Heart left ventricle (tissue), 16 donors: ENCODE measurements at regions of chr18 and their contacts with region 1.

Region 1: DNA sequence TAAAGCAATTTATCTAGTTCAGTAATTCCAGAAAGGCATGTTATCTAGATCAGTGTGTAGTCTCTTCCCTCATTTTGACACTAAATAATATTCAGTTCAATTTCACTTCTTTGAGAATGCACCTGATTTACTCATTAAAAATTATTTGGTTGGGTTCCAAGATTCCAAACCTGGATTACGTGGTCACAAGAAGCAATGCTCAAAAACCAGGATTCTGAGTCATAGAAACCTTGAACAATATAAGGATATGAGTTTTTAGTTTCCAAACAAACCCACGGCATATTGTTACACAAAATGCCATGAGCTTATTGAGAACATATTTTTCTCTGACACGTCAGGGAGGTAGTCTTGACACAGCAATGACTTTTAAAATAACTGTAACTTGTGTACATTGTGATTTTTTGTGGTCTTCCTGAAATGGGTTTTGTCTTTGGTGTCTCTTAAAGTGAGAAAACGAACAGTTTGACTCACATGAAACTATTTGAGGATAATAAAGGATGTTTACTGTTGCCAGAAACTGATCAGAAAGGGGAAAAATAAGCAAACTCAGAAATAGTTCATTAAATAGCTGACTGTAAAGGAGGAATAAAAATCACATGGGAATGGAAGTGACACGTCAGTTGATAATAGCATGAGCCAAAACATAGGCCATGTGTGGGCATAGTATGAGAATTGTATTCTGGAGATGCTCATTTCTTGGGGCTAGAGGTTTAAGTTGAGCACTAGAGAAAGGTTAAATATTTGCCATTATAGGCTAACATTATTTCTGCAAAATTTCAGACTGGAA is 617.7 kb upstream of the CDH2 start:
- DNase-seq: no peak
- ATAC-seq: peak in 3 of 4 donors; percentile 36 to 69 (median 57)
- H3K4me3 ChIP-seq: no peak overlapping the region
- H3K27ac ChIP-seq: peak overlapping the region in 7 of 12 donors; percentile 14 to 48 (median 23)
- H3K4me1 ChIP-seq: peaks cover 0 to 7% (median 0%) of the 10 kb centered on the region in 12 donors
- H3K27me3 ChIP-seq: no peaks in the 10 kb centered on the region
- CTCF ChIP-seq: no peak
- POLR2A ChIP-seq: no peak

Region 2: DNA sequence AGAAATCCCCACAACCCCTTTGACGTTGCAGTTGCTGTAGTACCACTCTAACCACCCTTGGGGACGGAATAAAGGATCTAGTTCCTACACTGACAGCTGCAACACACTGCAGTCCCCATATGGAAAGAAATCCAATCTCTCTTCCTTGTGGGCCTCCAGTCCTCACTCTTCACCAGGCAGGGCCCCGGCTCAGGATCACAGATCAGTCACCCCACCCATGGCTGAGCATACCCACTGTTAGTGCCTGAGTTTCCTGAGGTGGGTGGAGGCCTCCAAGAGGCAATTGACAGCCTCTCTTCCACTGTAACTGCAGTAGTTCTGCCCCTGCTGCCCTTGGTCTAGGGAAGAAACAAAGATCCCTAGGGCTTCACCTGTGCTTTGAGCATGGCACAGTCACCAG is 52.3 kb after region 1 on chr18:
- intact Hi-C with region 1: loop called in 1 of 10 experiments (anchors 5 kb)
- DNase-seq: no peak
- ATAC-seq: no peak
- H3K4me3 ChIP-seq: no peak overlapping the region
- H3K27ac ChIP-seq: no peak overlapping the region
- H3K4me1 ChIP-seq: no peaks in the 10 kb centered on the region
- H3K27me3 ChIP-seq: no peaks in the 10 kb centered on the region
- CTCF ChIP-seq: no peak
- POLR2A ChIP-seq: no peak

Region 3: DNA sequence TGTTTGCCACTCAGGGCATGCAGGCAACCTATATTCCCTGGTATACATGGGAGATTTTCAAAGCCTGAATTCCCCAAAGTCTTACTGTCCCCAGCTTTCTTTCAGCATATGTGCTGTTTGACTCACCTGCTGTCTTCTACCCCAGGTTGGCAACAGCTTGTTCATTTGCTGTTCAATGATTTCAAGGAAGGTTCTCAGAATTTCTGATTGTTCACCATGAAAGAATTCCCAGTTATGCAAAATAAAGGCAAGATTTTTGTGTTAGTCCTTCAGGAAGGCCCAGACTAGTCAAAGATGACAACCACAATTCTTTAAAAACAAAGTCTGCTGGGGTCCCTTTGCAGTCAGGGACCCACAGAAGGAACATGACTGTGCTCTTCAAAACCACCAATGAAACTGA is 440.1 kb after region 1 on chr18:
- intact Hi-C with region 1: no loop called
- DNase-seq: no peak
- ATAC-seq: no peak
- H3K4me3 ChIP-seq: no peak overlapping the region
- H3K27ac ChIP-seq: no peak overlapping the region
- H3K4me1 ChIP-seq: no peaks in the 10 kb centered on the region
- H3K27me3 ChIP-seq: no peaks in the 10 kb centered on the region
- CTCF ChIP-seq: no peak
- POLR2A ChIP-seq: no peak